CD8-positive, alpha-beta memory T cell (primary cell): ENCODE measurements at regions of chr12 and their contacts with region 1.

Region 1: GRCh38 chr12:50006789-50007436 is 18.4 kb downstream of the RACGAP1 start:
- DNase-seq: no peak
- H3K4me3 ChIP-seq: no peak overlapping the region
- H3K4me3 Mint-ChIP-seq: no peak overlapping the region
- H3K27ac ChIP-seq: no peak overlapping the region
- H3K27ac Mint-ChIP-seq: peak overlapping the region in 1 of 8 donors; percentile 14
- H3K4me1 ChIP-seq: no peaks in the 10 kb centered on the region
- H3K4me1 Mint-ChIP-seq: peaks cover 4 to 12% (median 4%) of the 10 kb centered on the region in 3 donors
- H3K27me3 ChIP-seq: no peaks in the 10 kb centered on the region
- H3K27me3 Mint-ChIP-seq: no peaks in the 10 kb centered on the region

Region 2: DNA sequence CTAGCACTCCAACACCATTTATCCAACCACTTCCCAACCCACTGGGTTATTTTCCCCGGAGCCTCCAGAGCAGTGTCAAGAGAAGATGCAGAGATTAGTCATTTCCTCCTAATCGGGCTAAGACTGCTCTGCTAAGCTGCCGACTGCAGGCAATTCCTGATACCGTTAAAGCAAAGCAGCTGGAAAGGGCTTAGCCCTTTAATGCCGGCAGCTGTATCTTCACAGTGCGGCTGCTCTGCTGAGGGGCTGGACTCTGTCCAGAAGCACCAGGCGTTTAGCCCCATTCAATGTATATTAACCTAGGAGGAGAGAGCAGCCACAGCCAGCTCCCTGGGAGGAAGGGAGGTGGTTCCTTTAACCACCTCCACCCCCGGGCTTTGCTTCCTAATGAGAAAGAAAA is 23.0 kb before region 1 on chr12:
- CTCF ChIA-PET with region 1: no interaction called
- POLR2A ChIA-PET with region 1: no interaction called
- DNase-seq: no peak
- H3K4me3 ChIP-seq: no peak overlapping the region
- H3K4me3 Mint-ChIP-seq: no peak overlapping the region
- H3K27ac ChIP-seq: no peak overlapping the region
- H3K27ac Mint-ChIP-seq: peak overlapping the region in 1 of 8 donors; percentile 13
- H3K4me1 ChIP-seq: no peaks in the 10 kb centered on the region
- H3K4me1 Mint-ChIP-seq: no peaks in the 10 kb centered on the region
- H3K27me3 ChIP-seq: no peaks in the 10 kb centered on the region
- H3K27me3 Mint-ChIP-seq: no peaks in the 10 kb centered on the region

Region 3: DNA sequence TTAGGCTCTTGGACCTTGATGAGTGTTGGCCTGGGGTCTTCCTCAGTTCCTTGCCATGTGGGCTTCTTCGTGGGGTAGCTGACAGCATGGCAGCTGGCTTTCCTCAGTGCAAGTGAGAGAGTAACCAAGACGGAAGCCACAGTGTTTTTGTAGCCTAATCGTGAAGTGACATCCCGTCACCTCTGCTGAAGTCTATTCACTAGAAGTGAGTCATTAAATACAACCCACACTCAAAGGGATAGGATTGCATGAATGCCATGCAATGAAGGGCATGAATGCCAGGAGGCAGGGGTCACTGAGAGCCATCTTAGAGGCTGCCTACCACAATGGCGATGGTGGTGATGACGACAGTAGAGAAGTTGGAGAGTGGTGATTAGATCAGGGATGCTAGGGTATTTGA is 36.9 kb after region 1 on chr12:
- CTCF ChIA-PET with region 1: interaction called, 10 read pairs
- POLR2A ChIA-PET with region 1: no interaction called
- DNase-seq: no peak
- H3K4me3 ChIP-seq: no peak overlapping the region
- H3K4me3 Mint-ChIP-seq: no peak overlapping the region
- H3K27ac ChIP-seq: no peak overlapping the region
- H3K27ac Mint-ChIP-seq: no peak overlapping the region
- H3K4me1 ChIP-seq: no peaks in the 10 kb centered on the region
- H3K4me1 Mint-ChIP-seq: no peaks in the 10 kb centered on the region
- H3K27me3 ChIP-seq: no peaks in the 10 kb centered on the region
- H3K27me3 Mint-ChIP-seq: peaks cover 5% of the 10 kb centered on the region in 2 donors